Spleen (tissue), 13 donors: ENCODE measurements at regions of chr7 and their contacts with region 1.

Region 1: GRCh38 chr7:28926871-28927597 is 31.1 kb downstream of the TRIL start:
- DNase-seq: peak; percentile 86
- H3K4me3 ChIP-seq: peak overlapping the region; percentile 22 to 67 (median 40)
- H3K27ac ChIP-seq: peak overlapping the region in 7 of 8 donors; percentile 32 to 79 (median 69)
- H3K4me1 ChIP-seq: peaks cover 8 to 34% (median 26%) of the 10 kb centered on the region in 6 donors
- H3K27me3 ChIP-seq: no peaks in the 10 kb centered on the region
- CTCF ChIP-seq: peak; percentile 76 to 94 (median 85)
- POLR2A ChIP-seq: no peak

Region 2: GRCh38 chr7:29035044-29035740 is 108.2 kb after region 1 on chr7:
- intact Hi-C with region 1: no loop called
- DNase-seq: no peak
- H3K4me3 ChIP-seq: no peak overlapping the region
- H3K27ac ChIP-seq: peak overlapping the region in 5 of 8 donors; percentile 4 to 42 (median 25)
- H3K4me1 ChIP-seq: peaks cover 8 to 41% (median 20%) of the 10 kb centered on the region in 6 donors
- H3K27me3 ChIP-seq: no peaks in the 10 kb centered on the region
- CTCF ChIP-seq: no peak
- POLR2A ChIP-seq: no peak

Region 3: GRCh38 chr7:29319719-29320521 is 392.9 kb after region 1 on chr7:
- intact Hi-C with region 1: no loop called
- DNase-seq: no peak
- H3K4me3 ChIP-seq: no peak overlapping the region
- H3K27ac ChIP-seq: peak overlapping the region in 5 of 8 donors; percentile 12 to 61 (median 39)
- H3K4me1 ChIP-seq: peaks cover 5 to 29% (median 19%) of the 10 kb centered on the region in 6 donors
- H3K27me3 ChIP-seq: no peaks in the 10 kb centered on the region
- CTCF ChIP-seq: no peak
- POLR2A ChIP-seq: no peak

Region 4: GRCh38 chr7:29600661-29601060 is 673.6 kb after region 1 on chr7:
- intact Hi-C with region 1: loop called (anchors 5 kb)
- DNase-seq: no peak
- H3K4me3 ChIP-seq: no peak overlapping the region
- H3K27ac ChIP-seq: no peak overlapping the region
- H3K4me1 ChIP-seq: no peaks in the 10 kb centered on the region
- H3K27me3 ChIP-seq: peaks cover 0 to 3% (median 0%) of the 10 kb centered on the region in 7 donors
- CTCF ChIP-seq: no peak
- POLR2A ChIP-seq: no peak